ENCODE measurements at regions of chr7 and their contacts with region 1.

Region 1: GRCh38 chr7:131071786-131072504 is 255.7 kb upstream of the MKLN1 start:
- DNase-seq: peak; percentile 22
- ATAC-seq: no peak
- H3K4me3 Mint-ChIP-seq: no peak overlapping the region
- H3K27ac Mint-ChIP-seq: peak overlapping the region; percentile 70
- H3K4me1 Mint-ChIP-seq: peaks cover 78% of the 10 kb centered on the region
- H3K27me3 Mint-ChIP-seq: no peaks in the 10 kb centered on the region

Region 2: DNA sequence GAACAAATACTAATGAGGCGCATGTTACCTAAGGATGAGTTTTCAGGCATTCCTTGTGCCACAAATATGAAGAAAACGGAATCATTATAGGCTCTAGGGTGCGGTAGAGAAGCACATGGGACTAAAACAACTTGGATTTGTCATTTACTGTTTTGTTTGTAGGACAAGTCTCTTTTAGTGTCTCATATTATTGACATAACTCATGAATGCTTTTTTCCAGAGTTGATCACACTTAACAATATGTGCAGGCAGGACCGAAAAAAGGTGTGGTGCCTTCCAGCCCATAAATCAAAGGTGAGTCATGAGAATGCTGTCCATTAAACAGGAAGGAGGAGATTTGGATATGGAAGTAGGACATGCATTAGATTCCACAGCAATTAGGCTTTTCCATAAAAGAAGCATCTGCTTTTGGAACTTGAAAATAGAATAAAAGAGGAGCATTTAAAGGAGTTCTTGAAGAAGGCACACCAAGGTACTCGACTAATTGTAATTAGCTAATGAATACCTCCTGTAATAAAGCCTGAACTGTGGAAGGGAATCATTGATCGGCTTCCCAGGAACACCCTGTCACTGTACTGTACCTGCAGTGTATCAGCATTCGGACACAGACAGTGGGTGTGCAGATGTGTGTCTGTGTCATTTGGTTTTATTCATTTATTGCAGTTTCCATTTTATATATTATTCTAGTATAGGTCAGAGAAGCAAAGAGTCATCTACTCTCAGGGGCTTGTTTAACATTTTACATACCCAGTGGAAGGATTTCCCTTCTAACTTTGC is 218.3 kb before region 1 on chr7:
- CTCF ChIA-PET with region 1: no interaction called
- POLR2A ChIA-PET with region 1: no interaction called
- intact Hi-C with region 1: no loop called
- DNase-seq: no peak
- ATAC-seq: no peak
- H3K4me3 Mint-ChIP-seq: no peak overlapping the region
- H3K27ac Mint-ChIP-seq: no peak overlapping the region
- H3K4me1 Mint-ChIP-seq: no peaks in the 10 kb centered on the region
- H3K27me3 Mint-ChIP-seq: no peaks in the 10 kb centered on the region

Region 3: GRCh38 chr7:131188367-131189339 is 116.7 kb after region 1 on chr7:
- CTCF ChIA-PET with region 1: interaction called, 7 read pairs
- POLR2A ChIA-PET with region 1: interaction called, 3 read pairs
- intact Hi-C with region 1: loop called in 1 of 2 experiments (anchors 5 kb)
- DNase-seq: peak; percentile 65
- ATAC-seq: peak; percentile 84
- H3K4me3 Mint-ChIP-seq: peak overlapping the region; percentile 58
- H3K27ac Mint-ChIP-seq: peak overlapping the region; percentile 96
- H3K4me1 Mint-ChIP-seq: peaks cover 55% of the 10 kb centered on the region
- H3K27me3 Mint-ChIP-seq: no peaks in the 10 kb centered on the region

Region 4: DNA sequence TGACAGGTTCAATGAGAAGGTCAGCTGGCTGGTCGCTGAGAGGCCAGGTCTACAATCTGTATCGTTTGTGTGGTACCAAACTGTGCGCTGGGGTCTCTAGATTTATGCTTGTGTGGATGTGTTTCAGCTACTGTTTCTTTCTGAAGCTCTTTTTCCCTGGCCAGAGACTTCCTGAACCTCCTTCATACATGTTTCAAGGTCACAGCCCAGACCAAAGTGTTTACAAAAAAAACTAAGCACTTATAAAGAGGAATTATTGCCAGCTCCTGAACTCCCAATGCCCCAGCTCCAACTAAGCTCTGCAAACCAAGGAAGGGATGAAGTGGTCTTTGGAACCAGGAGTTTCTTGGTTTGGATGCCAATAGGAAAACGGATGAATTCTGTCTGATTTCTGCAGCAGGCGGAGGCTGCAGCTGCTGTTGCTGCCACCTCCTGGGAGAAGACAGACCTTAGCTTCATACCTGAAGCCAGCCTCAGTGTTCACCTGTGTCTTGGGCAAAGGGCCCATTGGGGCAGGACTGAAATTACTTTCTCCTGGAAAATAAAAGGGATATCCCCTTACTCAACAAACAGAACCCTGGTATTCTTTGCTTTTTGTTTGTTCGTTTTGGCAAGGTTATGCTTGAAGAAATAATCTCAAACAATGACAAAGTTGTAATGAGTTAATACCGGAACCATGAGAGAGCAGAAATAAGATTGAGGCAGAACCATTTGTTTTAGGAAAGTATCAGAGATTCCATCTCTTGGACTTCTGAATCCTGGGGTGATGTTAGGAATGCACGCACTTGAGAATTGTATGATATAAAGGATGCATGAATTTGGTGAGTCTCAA is 231.1 kb after region 1 on chr7:
- CTCF ChIA-PET with region 1: no interaction called
- POLR2A ChIA-PET with region 1: no interaction called
- intact Hi-C with region 1: loop called (anchors 1 kb)
- DNase-seq: peak; percentile 46
- ATAC-seq: peak; percentile 49
- H3K4me3 Mint-ChIP-seq: no peak overlapping the region
- H3K27ac Mint-ChIP-seq: no peak overlapping the region
- H3K4me1 Mint-ChIP-seq: peaks cover 6% of the 10 kb centered on the region
- H3K27me3 Mint-ChIP-seq: no peaks in the 10 kb centered on the region

Region 5: GRCh38 chr7:131370523-131370968 is 298.6 kb after region 1 on chr7:
- CTCF ChIA-PET with region 1: interaction called, 3 read pairs
- POLR2A ChIA-PET with region 1: no interaction called
- intact Hi-C with region 1: loop called in 1 of 2 experiments (anchors 5 kb)
- DNase-seq: peak; percentile 30
- ATAC-seq: peak; percentile 64
- H3K4me3 Mint-ChIP-seq: no peak overlapping the region
- H3K27ac Mint-ChIP-seq: no peak overlapping the region
- H3K4me1 Mint-ChIP-seq: peaks cover 70% of the 10 kb centered on the region
- H3K27me3 Mint-ChIP-seq: no peaks in the 10 kb centered on the region

Region 6: GRCh38 chr7:131513245-131514061 is 441.5 kb after region 1 on chr7:
- CTCF ChIA-PET with region 1: interaction called, 4 read pairs
- POLR2A ChIA-PET with region 1: no interaction called
- intact Hi-C with region 1: loop called (anchors 1 to 2 kb)
- DNase-seq: peak; percentile 92
- ATAC-seq: peak; percentile 99
- H3K4me3 Mint-ChIP-seq: no peak overlapping the region
- H3K27ac Mint-ChIP-seq: no peak overlapping the region
- H3K4me1 Mint-ChIP-seq: peaks cover 6% of the 10 kb centered on the region
- H3K27me3 Mint-ChIP-seq: peaks cover 9% of the 10 kb centered on the region